ENCODE measurements at regions of chr17 and their contacts with region 1.

Region 1: GRCh38 chr17:64281962-64282727 is 19.1 kb upstream of the TEX2 start:
- DNase-seq: peak; percentile 85
- H3K4me3 Mint-ChIP-seq: no peak overlapping the region
- H3K27ac Mint-ChIP-seq: no peak overlapping the region
- H3K4me1 Mint-ChIP-seq: peaks cover 4% of the 10 kb centered on the region
- H3K27me3 Mint-ChIP-seq: no peaks in the 10 kb centered on the region

Region 2: DNA sequence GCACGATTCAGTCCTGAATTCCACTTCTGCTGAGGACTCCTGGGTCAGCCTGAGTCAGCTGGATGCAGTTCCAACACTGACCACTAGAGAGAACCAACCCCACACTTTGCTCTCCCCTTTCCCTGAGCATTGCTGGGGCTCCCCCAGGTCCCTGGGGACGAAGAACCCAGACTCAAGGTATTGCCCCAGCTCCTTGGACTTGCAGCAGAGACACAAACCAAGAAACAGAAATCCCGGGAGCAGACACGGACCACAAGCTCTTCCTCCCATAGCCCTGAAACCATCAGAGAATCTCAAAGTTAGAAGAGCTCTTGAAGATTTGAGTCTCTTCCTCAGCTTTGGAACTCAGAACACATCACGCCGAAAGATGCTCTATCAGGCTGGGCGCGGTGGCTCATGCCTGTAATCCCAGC is 362.8 kb before region 1 on chr17:
- intact Hi-C with region 1: loop called (anchors 10 kb)
- DNase-seq: peak; percentile 93
- H3K4me3 Mint-ChIP-seq: no peak overlapping the region
- H3K27ac Mint-ChIP-seq: peak overlapping the region; percentile 66
- H3K4me1 Mint-ChIP-seq: peaks cover 9% of the 10 kb centered on the region
- H3K27me3 Mint-ChIP-seq: peaks cover 10% of the 10 kb centered on the region

Region 3: GRCh38 chr17:64216338-64217248 is 65.6 kb before region 1 on chr17:
- intact Hi-C with region 1: loop called (anchors 5 kb)
- DNase-seq: no peak
- H3K4me3 Mint-ChIP-seq: no peak overlapping the region
- H3K27ac Mint-ChIP-seq: no peak overlapping the region
- H3K4me1 Mint-ChIP-seq: peaks cover 11% of the 10 kb centered on the region
- H3K27me3 Mint-ChIP-seq: no peaks in the 10 kb centered on the region

Region 4: GRCh38 chr17:64262417-64263260 is 19.5 kb before region 1 on chr17 and contains the start of gene TEX2:
- intact Hi-C with region 1: no loop called
- DNase-seq: peak; percentile 90
- H3K4me3 Mint-ChIP-seq: peak within 1 kb of the TSS; percentile 89
- H3K27ac Mint-ChIP-seq: peak within 1 kb of the TSS; percentile 94
- H3K4me1 Mint-ChIP-seq: peaks cover 32% of the 10 kb centered on the region
- H3K27me3 Mint-ChIP-seq: peaks cover 16% of the 10 kb centered on the region
- total RNA-seq, gene TEX2: 22.2 and 23.9 TPM in 2 replicates